Dendritic cell treated with granulocyte-macrophage colony-stimulating factor and Interleukin-4, amounts not matched to agents 40 ng/mL and 50 ng/mL, for 4 days (primary cell): ENCODE measurements at regions of chr3 and their contacts with region 1.

Region 1: DNA sequence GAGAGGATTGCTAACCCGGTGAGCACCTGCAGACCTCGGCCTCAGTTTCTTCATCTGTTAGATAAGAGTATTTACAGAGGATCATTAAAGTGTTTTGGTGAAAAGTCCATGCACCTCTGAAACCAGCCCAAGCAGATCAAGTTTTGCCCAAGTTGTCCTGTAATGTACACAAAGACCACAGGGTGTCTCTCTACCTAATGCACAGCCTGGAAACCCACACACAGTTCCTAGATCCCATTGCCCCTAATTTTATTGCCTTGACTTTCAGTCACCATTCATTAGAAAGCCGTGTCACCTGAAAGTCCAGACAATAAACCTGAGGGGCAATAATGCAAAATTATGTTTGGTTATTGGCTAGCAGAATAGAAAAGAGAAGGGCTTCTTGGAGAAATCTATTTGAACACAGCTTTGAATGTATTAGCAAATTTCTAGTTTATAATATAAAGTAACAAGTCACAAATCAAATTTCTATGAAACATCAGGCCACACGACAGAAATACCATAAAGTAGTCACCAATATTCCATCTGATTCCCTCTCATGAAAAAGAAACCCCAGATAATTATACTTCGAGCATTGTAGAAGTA is 161.3 kb upstream of the SLC2A2 start:
- H3K4me3 Mint-ChIP-seq: no peak overlapping the region
- H3K27ac Mint-ChIP-seq: no peak overlapping the region
- H3K4me1 Mint-ChIP-seq: peaks cover 29% of the 10 kb centered on the region
- H3K27me3 Mint-ChIP-seq: no peaks in the 10 kb centered on the region

Region 2: GRCh38 chr3:170961616-170962400 is 226.0 kb before region 1 on chr3:
- intact Hi-C with region 1: loop called (anchors 5 kb)
- H3K4me3 Mint-ChIP-seq: no peak overlapping the region
- H3K27ac Mint-ChIP-seq: no peak overlapping the region
- H3K4me1 Mint-ChIP-seq: no peaks in the 10 kb centered on the region
- H3K27me3 Mint-ChIP-seq: no peaks in the 10 kb centered on the region

Region 3: DNA sequence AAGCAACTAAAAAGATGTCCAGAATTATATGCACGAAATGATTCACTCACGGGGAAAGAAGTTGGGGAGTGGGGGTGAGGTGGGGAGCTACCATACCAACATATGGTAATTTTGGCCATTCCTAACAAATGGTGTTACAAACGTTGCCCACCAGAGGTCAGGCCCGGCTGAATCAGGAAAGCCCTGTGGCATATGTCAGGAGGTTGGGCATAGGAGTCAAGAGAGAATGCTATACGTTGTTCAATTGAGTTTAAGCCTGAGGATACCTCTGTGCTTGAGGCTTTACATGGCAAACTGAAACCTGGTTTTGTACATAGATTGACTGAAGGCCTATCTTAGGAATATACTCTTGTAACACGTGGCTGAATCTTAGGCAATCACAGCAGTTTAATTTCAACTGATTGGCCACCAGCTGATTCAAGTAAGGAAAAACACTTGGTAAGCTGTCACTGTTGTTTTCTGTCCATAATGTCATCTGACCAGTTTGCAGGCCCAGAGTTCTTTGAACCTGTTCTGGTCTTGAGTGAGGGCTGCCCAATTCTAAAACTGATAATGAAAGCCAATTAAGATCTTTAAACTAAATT is 137.8 kb before region 1 on chr3:
- intact Hi-C with region 1: loop called (anchors 10 kb)
- H3K4me3 Mint-ChIP-seq: no peak overlapping the region
- H3K27ac Mint-ChIP-seq: no peak overlapping the region
- H3K4me1 Mint-ChIP-seq: no peaks in the 10 kb centered on the region
- H3K27me3 Mint-ChIP-seq: no peaks in the 10 kb centered on the region

Region 4: DNA sequence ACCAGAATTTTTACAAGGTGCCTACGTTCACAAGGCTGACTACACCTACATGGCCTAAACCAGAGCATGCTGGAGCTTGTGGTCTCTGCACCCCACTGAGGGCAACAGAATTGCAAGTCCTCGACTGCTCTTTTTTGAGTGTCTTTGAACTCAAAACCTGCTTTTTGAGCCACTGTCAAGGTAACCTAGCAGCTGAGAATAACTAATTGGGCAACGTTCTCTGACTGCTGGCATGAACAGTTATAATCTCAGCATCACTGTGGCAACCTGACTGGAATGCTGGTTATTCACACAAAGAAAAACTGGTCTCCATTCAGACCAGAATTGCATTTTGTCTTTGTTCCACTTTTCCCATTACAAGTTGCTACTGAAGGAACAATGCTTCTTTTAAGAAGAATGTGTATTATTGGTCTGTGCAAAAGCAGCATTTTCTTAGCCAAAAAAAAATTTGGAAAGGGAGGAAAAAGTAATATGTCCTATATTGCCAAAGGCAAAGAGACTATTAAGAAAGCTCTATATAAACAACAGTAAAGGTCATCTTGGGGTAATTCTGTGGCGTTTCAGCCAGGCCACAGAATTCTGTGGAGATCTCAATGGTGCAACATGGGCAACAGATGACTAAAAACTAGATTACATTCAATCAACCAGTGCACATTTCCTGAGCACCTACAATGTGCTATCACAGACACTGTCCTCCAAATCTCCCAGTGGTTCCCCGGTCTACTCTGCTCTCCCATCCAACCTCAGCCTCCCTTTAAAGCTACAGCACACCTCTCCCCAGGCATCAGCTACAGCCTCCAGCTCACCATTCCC is 195.6 kb after region 1 on chr3:
- intact Hi-C with region 1: loop called (anchors 1 kb)
- H3K4me3 Mint-ChIP-seq: no peak overlapping the region
- H3K27ac Mint-ChIP-seq: no peak overlapping the region
- H3K4me1 Mint-ChIP-seq: peaks cover 16% of the 10 kb centered on the region
- H3K27me3 Mint-ChIP-seq: no peaks in the 10 kb centered on the region

Region 5: DNA sequence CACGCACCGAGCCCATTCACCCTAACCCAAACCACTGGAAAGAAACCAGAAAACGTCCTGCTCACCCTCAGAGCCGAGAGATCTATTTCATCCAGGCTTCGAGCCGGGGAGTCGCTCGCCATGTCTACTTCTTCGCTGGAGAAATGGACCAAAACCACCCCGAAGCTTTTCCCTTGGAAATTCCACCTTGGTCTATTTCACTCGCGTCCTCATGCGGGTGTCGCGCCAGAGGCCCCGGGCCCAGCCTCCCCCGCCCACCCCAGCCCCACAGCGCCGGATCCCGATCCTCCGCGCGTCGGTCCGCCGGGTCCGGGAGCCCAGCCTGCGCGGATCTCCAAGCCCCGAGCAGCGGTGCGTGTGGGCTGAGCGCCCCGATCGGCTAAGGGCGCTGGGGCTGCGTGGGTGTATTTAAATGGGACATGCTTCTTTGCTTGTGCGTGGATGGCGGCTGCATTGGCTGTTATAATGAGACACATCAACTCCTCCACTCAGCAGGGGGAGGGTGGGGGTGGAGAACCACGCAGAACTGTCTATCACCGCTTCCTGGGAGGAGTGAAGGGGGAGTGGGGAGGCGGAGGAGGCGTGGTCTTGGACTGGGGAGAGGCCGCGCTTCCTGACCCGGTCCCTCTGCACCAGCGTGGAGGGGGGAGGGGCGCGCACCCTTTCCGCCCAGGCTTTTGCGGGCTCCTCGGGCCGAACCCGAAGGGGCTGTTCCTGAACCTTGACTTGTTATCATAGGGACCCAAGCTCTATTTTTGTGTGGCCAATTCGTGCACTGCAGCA is 272.3 kb after region 1 on chr3 and contains the start of gene TNIK:
- intact Hi-C with region 1: loop called (anchors 5 kb)
- H3K4me3 Mint-ChIP-seq: peak within 1 kb of the TSS; percentile 94
- H3K27ac Mint-ChIP-seq: peak within 1 kb of the TSS; percentile 56
- H3K4me1 Mint-ChIP-seq: peaks cover 40% of the 10 kb centered on the region
- H3K27me3 Mint-ChIP-seq: peaks cover 58% of the 10 kb centered on the region